T-cell (primary cell): ENCODE measurements at regions of chr2 and their contacts with region 1.

Region 1: GRCh38 chr2:135756692-135757091 is 15.0 kb downstream of the UBXN4 start:
- DNase-seq: no peak
- ATAC-seq: no peak
- H3K4me3 ChIP-seq: no peak overlapping the region
- H3K4me3 Mint-ChIP-seq: no peak overlapping the region
- H3K27ac ChIP-seq: no peak overlapping the region
- H3K27ac Mint-ChIP-seq: no peak overlapping the region
- H3K4me1 ChIP-seq: no peaks in the 10 kb centered on the region
- H3K4me1 Mint-ChIP-seq: peaks cover 0 to 2% (median 1%) of the 10 kb centered on the region in 3 donors
- H3K27me3 ChIP-seq: no peaks in the 10 kb centered on the region
- H3K27me3 Mint-ChIP-seq: no peaks in the 10 kb centered on the region

Region 2: DNA sequence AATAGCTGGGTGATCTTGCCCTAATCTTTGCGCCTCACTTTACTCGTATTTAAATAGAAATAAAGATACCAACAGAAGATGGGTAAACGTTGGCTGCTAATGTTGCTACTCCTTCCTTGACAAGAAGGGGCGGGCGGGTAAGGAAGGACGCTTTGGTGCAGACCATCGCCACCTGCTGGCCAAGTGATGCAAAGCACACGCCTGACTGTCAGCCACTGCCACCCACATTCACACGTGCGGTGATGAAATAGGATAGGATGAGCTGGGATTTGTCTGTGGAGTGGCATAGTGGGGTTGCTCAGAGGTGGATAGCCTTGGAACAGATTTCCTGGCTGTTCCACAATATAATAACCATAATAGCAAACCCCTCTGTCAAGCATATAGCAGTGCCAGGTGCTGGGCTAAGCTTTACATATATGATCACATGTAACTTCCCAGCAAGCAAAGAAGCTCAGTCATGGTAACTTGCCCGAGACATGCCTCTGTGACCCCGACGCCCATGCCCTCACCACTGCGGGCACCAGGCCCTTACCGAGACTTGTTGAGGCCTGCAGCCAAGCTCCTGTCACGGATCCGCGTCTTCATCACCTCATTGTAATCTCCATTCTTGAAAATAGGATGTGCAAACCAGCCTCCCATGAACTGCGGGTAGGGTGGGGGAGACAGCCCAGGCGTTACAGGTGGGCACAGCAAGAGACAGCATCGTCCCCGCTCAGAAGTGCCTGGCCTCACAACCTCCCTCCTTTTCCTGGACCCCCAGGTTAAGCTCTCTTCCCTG is 41.0 kb after region 1 on chr2:
- CTCF ChIA-PET with region 1: interaction called, 3 to 10 read pairs
- POLR2A ChIA-PET with region 1: interaction called in 1 of 2 experiments, 4 read pairs
- DNase-seq: peak; percentile 56 to 87 (median 71)
- ATAC-seq: peak; percentile 77 to 89 (median 86)
- H3K4me3 ChIP-seq: no peak overlapping the region
- H3K4me3 Mint-ChIP-seq: no peak overlapping the region
- H3K27ac ChIP-seq: no peak overlapping the region
- H3K27ac Mint-ChIP-seq: no peak overlapping the region
- H3K4me1 ChIP-seq: peaks cover 0 to 10% of the 10 kb centered on the region in 2 experiments
- H3K4me1 Mint-ChIP-seq: peaks cover 9 to 23% (median 14%) of the 10 kb centered on the region in 3 donors
- H3K27me3 ChIP-seq: peaks cover 0 to 5% of the 10 kb centered on the region in 2 experiments
- H3K27me3 Mint-ChIP-seq: no peaks in the 10 kb centered on the region